Psoas muscle (tissue), 8 donors: ENCODE measurements at regions of chr12 and their contacts with region 1.

Region 1: GRCh38 chr12:14629832-14630710 is 62.4 kb upstream of the PLBD1 start:
- DNase-seq: peak; percentile 40 to 63
- ATAC-seq: peak; percentile 89 to 98 (median 96)
- H3K4me3 ChIP-seq: no peak overlapping the region
- H3K27ac ChIP-seq: no peak overlapping the region
- H3K4me1 ChIP-seq: no peaks in the 10 kb centered on the region
- H3K27me3 ChIP-seq: no peaks in the 10 kb centered on the region
- CTCF ChIP-seq: peak; percentile 96

Region 2: DNA sequence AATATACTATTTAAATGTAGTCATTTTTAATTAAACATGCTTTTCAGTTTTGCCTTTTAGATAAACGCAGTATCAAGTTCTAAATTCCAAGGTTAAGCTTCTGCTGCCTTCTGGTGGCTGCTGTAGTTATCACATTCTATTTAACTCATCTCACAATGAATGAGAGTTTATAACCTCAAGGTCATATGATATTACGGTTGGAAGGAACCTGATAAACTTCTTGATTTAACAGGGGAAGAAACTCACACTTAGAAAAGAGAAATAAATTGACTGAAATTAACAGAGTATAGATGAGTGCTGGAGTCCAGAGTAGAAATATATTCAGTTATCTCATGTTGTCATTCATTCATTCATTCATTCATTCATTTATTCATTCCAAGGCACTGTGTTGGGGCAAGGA is 34.4 kb after region 1 on chr12:
- intact Hi-C with region 1: loop called (anchors 2 to 5 kb)
- DNase-seq: no peak
- ATAC-seq: peak in 3 of 4 donors; percentile 57 to 76 (median 58)
- H3K4me3 ChIP-seq: no peak overlapping the region
- H3K27ac ChIP-seq: no peak overlapping the region
- H3K4me1 ChIP-seq: no peaks in the 10 kb centered on the region
- H3K27me3 ChIP-seq: no peaks in the 10 kb centered on the region
- CTCF ChIP-seq: peak; percentile 71

Region 3: GRCh38 chr12:14995583-14996425 is 365.7 kb after region 1 on chr12:
- intact Hi-C with region 1: loop called (anchors 10 kb)
- DNase-seq: no peak
- ATAC-seq: peak in 3 of 4 donors; percentile 42 to 81 (median 53)
- H3K4me3 ChIP-seq: no peak overlapping the region
- H3K27ac ChIP-seq: no peak overlapping the region
- H3K4me1 ChIP-seq: peaks cover 7% of the 10 kb centered on the region
- H3K27me3 ChIP-seq: no peaks in the 10 kb centered on the region
- CTCF ChIP-seq: peak; percentile 79

Region 4: DNA sequence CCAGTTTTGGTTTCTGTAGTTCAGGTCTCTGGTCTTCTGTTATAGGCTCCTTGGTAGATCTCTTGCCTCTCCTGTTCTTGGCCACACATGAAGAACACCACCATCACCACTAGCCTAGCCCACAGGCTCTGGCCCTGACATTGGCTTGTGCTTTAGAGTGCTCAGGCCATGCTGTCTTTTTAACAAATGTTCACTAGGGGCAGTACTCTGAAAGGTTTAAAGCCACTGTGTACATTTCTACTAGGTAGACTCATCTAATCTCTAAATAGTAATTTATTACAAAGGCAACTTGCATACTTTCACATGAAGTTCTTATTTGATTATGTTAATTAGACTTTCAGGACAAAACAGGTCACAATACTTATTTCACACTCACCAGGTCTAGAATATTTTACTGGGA is 381.1 kb after region 1 on chr12:
- intact Hi-C with region 1: no loop called
- DNase-seq: no peak
- ATAC-seq: no peak
- H3K4me3 ChIP-seq: no peak overlapping the region
- H3K27ac ChIP-seq: no peak overlapping the region
- H3K4me1 ChIP-seq: no peaks in the 10 kb centered on the region
- H3K27me3 ChIP-seq: no peaks in the 10 kb centered on the region
- CTCF ChIP-seq: no peak

Region 5: DNA sequence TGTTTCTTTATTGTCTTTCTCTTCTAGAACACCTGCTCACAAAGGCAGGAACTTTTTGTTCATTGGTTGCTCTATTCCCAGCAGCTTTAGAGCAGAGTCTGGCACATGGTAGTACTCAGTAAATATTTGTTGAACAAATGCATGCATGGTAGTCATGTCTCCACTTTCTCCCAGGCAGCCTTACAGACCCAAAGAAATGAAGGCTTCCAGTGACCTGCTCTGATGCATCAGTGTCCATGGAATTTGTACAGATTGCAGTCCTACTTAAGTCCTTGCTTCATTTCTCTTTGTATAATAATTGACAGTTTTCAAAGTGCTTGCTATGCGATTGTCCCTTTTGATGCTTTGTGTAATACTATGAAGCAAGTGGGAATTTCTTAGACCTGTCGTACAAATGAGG is 1400.7 kb after region 1 on chr12:
- intact Hi-C with region 1: no loop called
- DNase-seq: no peak
- ATAC-seq: no peak
- H3K4me3 ChIP-seq: no peak overlapping the region
- H3K27ac ChIP-seq: no peak overlapping the region
- H3K4me1 ChIP-seq: no peaks in the 10 kb centered on the region
- H3K27me3 ChIP-seq: no peaks in the 10 kb centered on the region
- CTCF ChIP-seq: no peak